A549 (cell line): ENCODE measurements at regions of chr9 and their contacts with region 1.

Region 1: GRCh38 chr9:74773886-74774479 is 113.7 kb downstream of the TRPM6 start:
- DNase-seq: peak; percentile 65 to 81
- ATAC-seq: peak; percentile 37 to 66; a peak in 4 of 6 replicates
- H3K4me3 ChIP-seq: no peak overlapping the region
- H3K27ac ChIP-seq: no peak overlapping the region
- H3K4me1 ChIP-seq: no peaks in the 10 kb centered on the region
- CTCF ChIP-seq: peak; percentile 94
- EP300 ChIP-seq: no peak
- POLR2A ChIP-seq: no peak
- RAD21 ChIP-seq: peak; percentile 91 to 94

Region 2: DNA sequence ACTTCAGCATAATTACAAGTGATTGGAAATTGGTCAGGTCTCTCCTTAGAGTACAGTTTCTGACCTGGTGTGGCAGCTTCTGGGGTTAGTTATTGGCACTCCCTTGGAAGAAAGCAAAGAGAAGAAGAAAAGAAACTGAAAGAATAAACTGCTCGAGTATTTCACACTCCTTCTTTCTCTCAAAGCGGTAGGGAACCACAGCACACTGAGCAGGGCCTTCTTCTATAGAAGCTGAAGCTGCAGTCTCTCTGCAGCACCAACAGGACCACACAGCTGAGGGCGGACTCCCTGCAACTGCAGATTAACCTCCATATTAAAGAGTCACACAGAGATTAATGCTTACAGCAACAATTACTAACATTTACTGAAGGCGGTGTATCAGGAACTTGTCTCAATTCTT is 38.2 kb before region 1 on chr9:
- CTCF ChIA-PET with region 1: interaction called, 10 read pairs
- POLR2A ChIA-PET with region 1: no interaction called
- DNase-seq: no peak
- ATAC-seq: no peak
- H3K4me3 ChIP-seq: no peak overlapping the region
- H3K27ac ChIP-seq: no peak overlapping the region
- H3K4me1 ChIP-seq: no peaks in the 10 kb centered on the region
- CTCF ChIP-seq: no peak
- EP300 ChIP-seq: no peak
- POLR2A ChIP-seq: no peak
- RAD21 ChIP-seq: no peak

Region 3: DNA sequence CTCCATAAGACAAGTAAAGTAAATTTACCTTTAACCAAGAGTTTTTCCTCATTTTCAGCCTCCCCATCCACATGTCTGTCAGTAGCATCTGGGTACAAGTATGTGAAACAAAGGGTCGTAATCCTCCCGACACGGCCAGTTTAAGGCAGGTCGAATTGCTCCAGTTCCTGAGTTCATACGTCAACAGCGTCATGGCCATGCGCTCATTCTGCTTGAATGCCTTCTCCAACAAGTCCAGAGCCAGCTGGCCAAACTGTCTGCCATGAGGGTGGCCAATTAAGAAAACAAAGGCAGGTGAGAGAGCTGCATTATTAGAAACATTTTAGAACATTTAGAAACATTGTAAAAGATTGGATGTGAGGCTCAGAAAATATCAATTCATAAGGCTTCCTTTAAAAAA is 26.2 kb after region 1 on chr9:
- CTCF ChIA-PET with region 1: interaction called, 20 read pairs
- POLR2A ChIA-PET with region 1: no interaction called
- DNase-seq: no peak
- ATAC-seq: no peak
- H3K4me3 ChIP-seq: no peak overlapping the region
- H3K27ac ChIP-seq: no peak overlapping the region
- H3K4me1 ChIP-seq: peaks cover 24% of the 10 kb centered on the region
- CTCF ChIP-seq: no peak
- EP300 ChIP-seq: no peak
- POLR2A ChIP-seq: no peak
- RAD21 ChIP-seq: no peak

Region 4: DNA sequence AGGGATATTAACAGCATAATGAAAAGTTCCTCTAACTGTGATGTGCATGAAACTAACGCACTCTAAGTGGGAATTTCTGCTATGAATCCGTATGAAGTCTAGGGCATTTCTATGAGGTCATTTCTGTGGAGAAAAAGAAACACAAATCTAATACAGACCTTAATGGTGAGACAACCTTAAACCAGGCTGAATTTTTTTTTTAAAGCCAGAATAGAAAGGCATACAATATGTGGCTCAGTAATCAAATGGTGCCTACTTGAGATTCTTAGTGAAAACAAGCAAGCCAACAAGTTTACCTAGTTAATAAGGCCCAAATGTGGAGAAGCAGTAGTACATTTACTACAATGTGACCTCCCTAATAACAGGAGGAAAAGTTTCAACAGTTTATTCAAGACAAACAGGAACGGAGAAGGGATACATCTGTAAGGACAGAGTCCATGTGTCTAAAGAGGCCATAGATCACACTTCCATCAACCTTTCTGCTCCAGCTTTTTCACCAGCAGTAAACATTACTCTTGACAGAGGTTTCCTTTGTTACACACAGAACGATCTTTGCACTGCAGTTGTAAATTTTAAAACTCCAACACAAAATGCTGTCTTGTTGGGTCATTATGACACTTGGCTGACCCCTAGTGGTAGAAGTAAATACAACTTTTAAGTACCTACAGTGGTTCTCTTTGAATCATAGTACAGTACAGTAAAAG is 227.9 kb after region 1 on chr9:
- CTCF ChIA-PET with region 1: interaction called, 304 read pairs
- POLR2A ChIA-PET with region 1: no interaction called
- DNase-seq: peak; percentile 21 to 86
- ATAC-seq: peak; percentile 97 to 98
- H3K4me3 ChIP-seq: no peak overlapping the region
- H3K27ac ChIP-seq: no peak overlapping the region
- H3K4me1 ChIP-seq: no peaks in the 10 kb centered on the region
- CTCF ChIP-seq: peak; percentile 94
- EP300 ChIP-seq: no peak
- POLR2A ChIP-seq: no peak
- RAD21 ChIP-seq: peak; percentile 80 to 88

Region 5: DNA sequence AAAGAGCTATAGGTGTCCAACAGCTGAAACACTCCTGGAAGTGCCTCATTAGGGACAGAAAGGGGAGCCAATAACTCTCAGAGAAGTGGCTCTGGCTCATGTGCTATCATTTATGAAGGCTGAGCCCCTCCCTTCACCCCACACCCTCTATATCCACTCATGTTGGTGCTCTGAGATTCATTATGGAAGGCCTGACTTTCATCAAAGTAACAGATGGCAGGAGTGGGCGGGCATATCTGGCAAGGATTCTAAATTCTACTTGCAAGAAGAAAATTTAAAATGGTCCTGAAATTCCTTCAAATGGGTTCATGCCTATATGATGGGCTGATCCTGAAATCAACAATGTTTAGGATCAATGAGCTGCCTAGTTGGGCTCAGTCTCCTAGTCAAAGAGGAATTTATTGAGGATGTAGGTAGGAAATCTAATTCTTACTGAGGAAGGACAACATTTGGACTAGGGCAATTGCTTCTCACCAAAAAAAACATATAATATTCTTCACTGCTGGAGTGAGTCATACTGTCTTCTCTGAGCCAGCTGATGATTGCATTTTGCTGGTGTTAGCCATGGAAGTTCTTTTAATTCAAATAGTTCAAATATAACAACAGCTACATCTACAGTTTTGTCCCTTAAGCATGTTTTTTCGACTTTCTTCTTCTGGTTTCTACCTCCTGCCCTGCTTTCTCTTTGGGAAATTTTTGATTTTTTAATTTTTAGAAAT is 290.5 kb after region 1 on chr9:
- CTCF ChIA-PET with region 1: interaction called, 16 read pairs
- POLR2A ChIA-PET with region 1: interaction called, 3 read pairs
- DNase-seq: no peak
- ATAC-seq: no peak
- H3K4me3 ChIP-seq: no peak overlapping the region
- H3K27ac ChIP-seq: no peak overlapping the region
- H3K4me1 ChIP-seq: no peaks in the 10 kb centered on the region
- CTCF ChIP-seq: no peak
- EP300 ChIP-seq: no peak
- POLR2A ChIP-seq: no peak
- RAD21 ChIP-seq: no peak

Region 6: GRCh38 chr9:75101096-75101495 is 327.1 kb after region 1 on chr9:
- CTCF ChIA-PET with region 1: interaction called, 10 read pairs
- POLR2A ChIA-PET with region 1: no interaction called
- DNase-seq: no peak
- ATAC-seq: no peak
- H3K4me3 ChIP-seq: no peak overlapping the region
- H3K27ac ChIP-seq: no peak overlapping the region
- H3K4me1 ChIP-seq: no peaks in the 10 kb centered on the region
- CTCF ChIP-seq: no peak
- EP300 ChIP-seq: no peak
- POLR2A ChIP-seq: no peak
- RAD21 ChIP-seq: no peak